Heart right ventricle (tissue), 16 donors: ENCODE measurements at regions of chr16 and their contacts with region 1.

Region 1: GRCh38 chr16:14559809-14560241 is 70.2 kb downstream of the PARN start:
- DNase-seq: no peak
- ATAC-seq: peak in 7 of 8 donors; percentile 27 to 81 (median 61)
- H3K4me3 ChIP-seq: no peak overlapping the region
- H3K27ac ChIP-seq: peak overlapping the region in 6 of 10 donors; percentile 4 to 50 (median 29)
- H3K4me1 ChIP-seq: peaks cover 0 to 18% (median 5%) of the 10 kb centered on the region in 9 donors
- H3K27me3 ChIP-seq: no peaks in the 10 kb centered on the region
- CTCF ChIP-seq: no peak

Region 2: GRCh38 chr16:14497245-14498082 is 62.4 kb before region 1 on chr16:
- intact Hi-C with region 1: loop called in 1 of 10 experiments (anchors 10 kb)
- DNase-seq: no peak
- ATAC-seq: no peak
- H3K4me3 ChIP-seq: no peak overlapping the region
- H3K27ac ChIP-seq: peak overlapping the region; percentile 3 to 77 (median 39)
- H3K4me1 ChIP-seq: peaks cover 0 to 58% (median 42%) of the 10 kb centered on the region in 9 donors
- H3K27me3 ChIP-seq: no peaks in the 10 kb centered on the region
- CTCF ChIP-seq: no peak

Region 3: GRCh38 chr16:14609716-14610115 is 49.9 kb after region 1 on chr16:
- intact Hi-C with region 1: loop called in 1 of 10 experiments (anchors 10 kb)
- DNase-seq: no peak
- ATAC-seq: no peak
- H3K4me3 ChIP-seq: no peak overlapping the region
- H3K27ac ChIP-seq: no peak overlapping the region
- H3K4me1 ChIP-seq: no peaks in the 10 kb centered on the region
- H3K27me3 ChIP-seq: no peaks in the 10 kb centered on the region
- CTCF ChIP-seq: no peak